ENCODE measurements at regions of chr19 and their contacts with region 1.

Region 1: GRCh38 chr19:49451430-49452181 is at the start of gene PIH1D1:
- DNase-seq: peak; percentile 69 to 97 (median 94)
- ATAC-seq: peak; percentile 71
- H3K4me3 ChIP-seq: peak within 1 kb of the TSS; percentile 85
- H3K4me3 Mint-ChIP-seq: peak within 1 kb of the TSS; percentile 95 to 100 (median 99)
- H3K27ac ChIP-seq: peak within 1 kb of the TSS; percentile 95
- H3K27ac Mint-ChIP-seq: peak within 1 kb of the TSS; percentile 92 to 100 (median 99)
- H3K4me1 ChIP-seq: peaks cover 15 to 26% of the 10 kb centered on the region in 2 donors
- H3K4me1 Mint-ChIP-seq: peaks cover 31 to 68% (median 55%) of the 10 kb centered on the region in 7 donors
- H3K27me3 ChIP-seq: no peaks in the 10 kb centered on the region
- H3K27me3 Mint-ChIP-seq: no peaks in the 10 kb centered on the region
- total RNA-seq, gene PIH1D1: 136 to 183 (median 159) TPM

Region 2: DNA sequence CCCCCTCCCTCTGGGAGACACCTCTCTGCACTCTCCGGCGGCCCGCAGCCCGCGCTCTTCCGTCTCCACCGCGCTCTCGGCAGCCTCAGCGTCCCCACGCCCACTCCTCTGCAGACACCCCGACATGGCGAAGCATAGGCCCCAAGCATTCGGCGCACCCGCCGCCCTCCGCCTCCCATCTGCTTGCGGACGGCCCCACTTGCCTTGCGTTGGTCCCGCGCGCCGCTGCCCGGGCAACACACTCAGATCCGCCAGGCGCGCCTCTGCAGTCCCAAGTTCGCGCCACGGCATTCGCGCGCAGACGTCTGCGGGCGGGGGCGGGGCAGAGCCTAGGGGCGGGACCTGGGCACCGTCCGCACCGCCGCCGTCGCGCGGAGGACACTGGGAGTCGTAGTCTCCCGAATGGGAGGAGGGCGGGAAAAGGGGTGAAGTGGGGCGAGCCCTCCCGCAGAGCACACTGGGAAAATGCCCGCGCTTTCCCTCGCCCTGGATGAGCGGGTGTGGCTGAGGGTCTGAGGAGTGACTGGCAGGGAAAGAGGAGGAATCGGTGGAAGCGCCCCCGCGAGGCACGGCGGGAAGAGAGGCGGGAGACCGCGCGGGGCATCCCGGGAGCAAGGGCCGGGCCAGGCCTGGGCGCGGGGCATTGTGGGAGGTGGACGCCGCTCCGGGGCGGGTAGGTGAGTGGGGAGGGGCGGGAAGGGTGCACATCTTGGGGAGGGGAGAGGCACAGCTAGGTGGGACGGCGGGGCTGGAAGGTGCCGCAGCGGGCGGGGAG is 1281.4 kb before region 1 on chr19 and contains the starts of genes LIG1 and ZSWIM9:
- CTCF ChIA-PET with region 1: interaction called, 11 read pairs
- POLR2A ChIA-PET with region 1: no interaction called
- intact Hi-C with region 1: no loop called
- DNase-seq: peak; percentile 87 to 96 (median 94)
- ATAC-seq: peak; percentile 89
- H3K4me3 ChIP-seq: peak within 1 kb of the TSS; percentile 98
- H3K4me3 Mint-ChIP-seq: peak within 1 kb of the TSS; percentile 90 to 100 (median 97)
- H3K27ac ChIP-seq: peak within 1 kb of the TSS; percentile 94
- H3K27ac Mint-ChIP-seq: peak within 1 kb of the TSS; percentile 92 to 100 (median 97)
- H3K4me1 ChIP-seq: peaks cover 14 to 16% of the 10 kb centered on the region in 2 donors
- H3K4me1 Mint-ChIP-seq: peaks cover 20 to 44% (median 32%) of the 10 kb centered on the region in 7 donors
- H3K27me3 ChIP-seq: no peaks in the 10 kb centered on the region
- H3K27me3 Mint-ChIP-seq: no peaks in the 10 kb centered on the region
- total RNA-seq, gene LIG1: 61.0 to 134 (median 122) TPM
- total RNA-seq, gene ZSWIM9: 5.0 to 11.6 (median 7.4) TPM

Region 3: GRCh38 chr19:48290771-48291488 is 1160.7 kb before region 1 on chr19:
- CTCF ChIA-PET with region 1: no interaction called
- POLR2A ChIA-PET with region 1: no interaction called
- intact Hi-C with region 1: no loop called
- DNase-seq: peak; percentile 22 to 79 (median 56)
- ATAC-seq: peak; percentile 79
- H3K4me3 ChIP-seq: peak overlapping the region; percentile 72
- H3K4me3 Mint-ChIP-seq: peak overlapping the region; percentile 71 to 86 (median 81)
- H3K27ac ChIP-seq: no peak overlapping the region
- H3K27ac Mint-ChIP-seq: peak overlapping the region in 2 of 9 donors; percentile 9 to 46
- H3K4me1 ChIP-seq: peaks cover 6 to 7% of the 10 kb centered on the region in 2 donors
- H3K4me1 Mint-ChIP-seq: peaks cover 0 to 8% (median 3%) of the 10 kb centered on the region in 7 donors
- H3K27me3 ChIP-seq: peaks cover 0 to 3% of the 10 kb centered on the region in 2 donors
- H3K27me3 Mint-ChIP-seq: peaks cover 0 to 9% (median 4%) of the 10 kb centered on the region in 5 donors

Region 4: GRCh38 chr19:49073514-49074378 is 377.9 kb before region 1 on chr19:
- CTCF ChIA-PET with region 1: no interaction called
- POLR2A ChIA-PET with region 1: no interaction called
- intact Hi-C with region 1: no loop called
- DNase-seq: no peak
- ATAC-seq: no peak
- H3K4me3 ChIP-seq: no peak overlapping the region
- H3K4me3 Mint-ChIP-seq: peak overlapping the region; percentile 11 to 82 (median 72)
- H3K27ac ChIP-seq: no peak overlapping the region
- H3K27ac Mint-ChIP-seq: peak overlapping the region in 3 of 9 donors; percentile 4 to 62 (median 7)
- H3K4me1 ChIP-seq: no peaks in the 10 kb centered on the region
- H3K4me1 Mint-ChIP-seq: peaks cover 7 to 20% (median 13%) of the 10 kb centered on the region in 7 donors
- H3K27me3 ChIP-seq: peaks cover 4 to 12% of the 10 kb centered on the region in 2 donors
- H3K27me3 Mint-ChIP-seq: peaks cover 48 to 73% (median 53%) of the 10 kb centered on the region in 5 donors

Region 5: DNA sequence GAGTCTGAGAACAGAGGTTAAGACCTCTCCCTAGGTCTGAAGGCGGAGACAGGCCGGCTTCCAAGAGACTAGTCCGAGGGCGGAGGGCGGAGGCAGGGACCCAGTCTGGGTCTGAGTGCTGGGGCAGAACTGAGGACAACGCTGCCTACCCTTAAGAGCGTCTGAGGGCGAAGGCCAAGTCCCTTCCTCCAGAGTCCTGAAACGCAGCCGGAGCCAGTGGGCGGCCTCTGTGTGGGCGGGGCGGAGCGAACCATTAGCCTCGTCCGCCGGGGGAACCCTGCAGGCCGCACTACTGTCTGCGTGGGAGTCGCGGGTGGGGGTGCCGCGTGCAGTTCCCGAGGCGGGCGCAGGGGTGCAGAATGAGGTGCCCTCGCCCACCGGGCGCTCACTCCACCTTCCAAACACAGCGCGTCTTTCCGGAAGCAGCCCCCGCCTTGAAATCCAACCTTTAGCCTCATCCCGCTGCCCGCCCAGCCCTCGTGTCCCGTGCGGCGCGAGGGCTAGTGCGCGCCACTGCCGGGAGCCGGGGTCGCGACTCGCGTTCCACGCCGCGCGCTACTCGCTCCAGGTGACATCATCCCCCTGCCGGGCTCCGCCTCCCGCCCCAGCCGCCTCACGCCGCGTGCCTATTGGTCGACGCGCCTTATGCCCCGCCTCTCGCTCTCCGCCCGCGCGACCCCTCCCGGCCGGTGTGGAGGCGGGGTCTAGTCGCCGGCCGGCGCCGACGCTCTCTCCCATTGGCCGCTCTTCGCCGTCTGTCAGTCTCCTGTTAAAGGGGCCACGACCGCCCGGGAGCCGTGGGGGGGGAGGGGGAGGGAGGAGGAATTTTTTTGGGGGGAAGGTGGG is 332.8 kb before region 1 on chr19 and contains the start of gene C19orf73:
- CTCF ChIA-PET with region 1: no interaction called
- POLR2A ChIA-PET with region 1: no interaction called
- intact Hi-C with region 1: loop called in 1 of 2 experiments (anchors 5 kb)
- DNase-seq: peak; percentile 93 to 98 (median 97)
- ATAC-seq: peak; percentile 91
- H3K4me3 ChIP-seq: peak within 1 kb of the TSS; percentile 83
- H3K4me3 Mint-ChIP-seq: peak within 1 kb of the TSS; percentile 83 to 91 (median 88)
- H3K27ac ChIP-seq: peak within 1 kb of the TSS; percentile 92
- H3K27ac Mint-ChIP-seq: peak within 1 kb of the TSS; percentile 89 to 95 (median 93)
- H3K4me1 ChIP-seq: peaks cover 13 to 16% of the 10 kb centered on the region in 2 donors
- H3K4me1 Mint-ChIP-seq: peaks cover 25 to 43% (median 39%) of the 10 kb centered on the region in 7 donors
- H3K27me3 ChIP-seq: no peaks in the 10 kb centered on the region
- H3K27me3 Mint-ChIP-seq: peaks cover 0 to 27% (median 0%) of the 10 kb centered on the region in 5 donors
- total RNA-seq, gene C19orf73: 1.3 to 2.8 (median 2.2) TPM

Region 6: DNA sequence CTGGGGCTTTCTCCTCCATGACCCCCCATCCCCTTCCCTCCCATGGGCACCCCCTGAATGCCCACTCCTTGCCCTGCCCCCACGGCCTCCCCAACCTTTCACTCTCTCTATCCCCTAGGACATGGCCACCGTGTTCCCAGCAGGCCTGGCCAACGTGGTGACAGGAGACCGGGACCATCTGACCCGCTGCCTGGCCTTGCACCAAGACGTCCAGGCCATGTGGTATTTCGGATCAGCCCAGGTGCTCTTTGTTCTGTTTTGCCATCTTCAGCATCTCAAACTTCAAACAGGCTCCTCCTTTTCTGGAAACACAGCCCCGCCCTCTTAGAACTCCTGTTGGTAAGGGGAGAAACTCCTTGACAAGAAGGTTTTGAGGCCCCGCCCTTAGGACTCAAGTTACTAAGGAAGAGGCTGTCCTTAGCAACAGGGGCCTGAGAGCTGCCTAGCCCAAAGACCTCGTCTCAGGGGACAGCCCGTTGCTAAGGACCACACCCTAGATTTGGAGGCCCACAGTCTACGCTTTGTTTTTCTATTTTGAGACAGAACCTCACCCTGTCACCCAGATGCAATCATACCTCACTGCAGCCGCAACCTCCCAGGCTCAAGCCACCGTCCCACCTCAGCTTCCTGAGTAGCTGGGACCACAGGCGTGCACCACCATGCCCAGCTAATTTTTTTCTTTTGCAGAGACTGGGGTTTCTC is 17.3 kb after region 1 on chr19:
- CTCF ChIA-PET with region 1: interaction called, 83 read pairs
- POLR2A ChIA-PET with region 1: interaction called, 226 read pairs
- intact Hi-C with region 1: loop called (anchors 1 kb)
- DNase-seq: peak; percentile 59 to 98 (median 95)
- ATAC-seq: peak; percentile 87
- H3K4me3 ChIP-seq: peak overlapping the region; percentile 10
- H3K4me3 Mint-ChIP-seq: peak overlapping the region; percentile 73 to 91 (median 81)
- H3K27ac ChIP-seq: peak overlapping the region; percentile 97
- H3K27ac Mint-ChIP-seq: peak overlapping the region; percentile 94 to 100 (median 100)
- H3K4me1 ChIP-seq: peaks cover 55 to 59% of the 10 kb centered on the region in 2 donors
- H3K4me1 Mint-ChIP-seq: peaks cover 23 to 56% (median 40%) of the 10 kb centered on the region in 7 donors
- H3K27me3 ChIP-seq: no peaks in the 10 kb centered on the region
- H3K27me3 Mint-ChIP-seq: no peaks in the 10 kb centered on the region

Region 7: GRCh38 chr19:49487277-49488045 is 35.9 kb after region 1 on chr19 and contains the start of gene RPL13A:
- CTCF ChIA-PET with region 1: interaction called, 3 read pairs
- POLR2A ChIA-PET with region 1: interaction called, 36 read pairs
- intact Hi-C with region 1: loop called (anchors 1 kb)
- DNase-seq: peak; percentile 97 to 99 (median 99)
- ATAC-seq: peak; percentile 94
- H3K4me3 ChIP-seq: peak within 1 kb of the TSS; percentile 100
- H3K4me3 Mint-ChIP-seq: peak within 1 kb of the TSS; percentile 95 to 99 (median 98)
- H3K27ac ChIP-seq: peak within 1 kb of the TSS; percentile 92
- H3K27ac Mint-ChIP-seq: peak within 1 kb of the TSS; percentile 89 to 99 (median 96)
- H3K4me1 ChIP-seq: peaks cover 19 to 26% of the 10 kb centered on the region in 2 donors
- H3K4me1 Mint-ChIP-seq: peaks cover 27 to 52% (median 42%) of the 10 kb centered on the region in 7 donors
- H3K27me3 ChIP-seq: no peaks in the 10 kb centered on the region
- H3K27me3 Mint-ChIP-seq: peaks cover 0 to 9% (median 0%) of the 10 kb centered on the region in 5 donors
- total RNA-seq, gene RPL13A: 2,467 to 6,044 (median 5,762) TPM

Region 8: DNA sequence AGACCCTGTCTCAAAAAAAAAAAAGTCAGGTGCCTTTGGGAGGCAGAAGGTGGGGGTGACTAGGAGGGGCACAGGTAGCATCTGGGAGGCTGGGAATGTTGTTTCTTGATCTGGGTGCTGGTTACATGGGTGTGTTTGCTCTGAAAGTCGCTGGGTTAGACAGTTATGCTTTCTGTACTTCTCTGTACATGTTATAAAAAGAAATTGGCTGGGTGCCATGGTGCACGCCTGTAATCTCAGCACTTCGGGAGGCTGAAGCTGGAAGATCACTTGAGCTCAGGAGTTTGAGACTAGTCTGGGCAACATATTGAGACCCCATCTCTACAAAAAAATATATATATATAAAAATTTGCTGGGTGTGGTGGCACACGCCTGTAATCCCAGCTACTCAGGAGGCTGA is 113.7 kb after region 1 on chr19:
- CTCF ChIA-PET with region 1: no interaction called
- POLR2A ChIA-PET with region 1: interaction called, 13 read pairs
- intact Hi-C with region 1: no loop called
- DNase-seq: peak in 5 of 9 donors; percentile 46 to 65 (median 54)
- ATAC-seq: no peak
- H3K4me3 ChIP-seq: peak overlapping the region; percentile 31
- H3K4me3 Mint-ChIP-seq: peak overlapping the region; percentile 11 to 90 (median 73)
- H3K27ac ChIP-seq: peak overlapping the region; percentile 88
- H3K27ac Mint-ChIP-seq: peak overlapping the region; percentile 91 to 99 (median 96)
- H3K4me1 ChIP-seq: peaks cover 77 to 85% of the 10 kb centered on the region in 2 donors
- H3K4me1 Mint-ChIP-seq: peaks cover 64 to 90% (median 84%) of the 10 kb centered on the region in 7 donors
- H3K27me3 ChIP-seq: no peaks in the 10 kb centered on the region
- H3K27me3 Mint-ChIP-seq: peaks cover 0 to 2% (median 0%) of the 10 kb centered on the region in 5 donors

Region 9: GRCh38 chr19:49590071-49590970 is 138.7 kb after region 1 on chr19:
- CTCF ChIA-PET with region 1: interaction called, 3 read pairs
- POLR2A ChIA-PET with region 1: interaction called, 13 read pairs
- intact Hi-C with region 1: loop called in 1 of 2 experiments (anchors 1 kb)
- DNase-seq: peak; percentile 85 to 98 (median 97)
- ATAC-seq: peak; percentile 90
- H3K4me3 ChIP-seq: peak overlapping the region; percentile 97
- H3K4me3 Mint-ChIP-seq: peak overlapping the region; percentile 85 to 95 (median 94)
- H3K27ac ChIP-seq: peak overlapping the region; percentile 86
- H3K27ac Mint-ChIP-seq: peak overlapping the region; percentile 76 to 95 (median 93)
- H3K4me1 ChIP-seq: peaks cover 15 to 18% of the 10 kb centered on the region in 2 donors
- H3K4me1 Mint-ChIP-seq: peaks cover 26 to 42% (median 31%) of the 10 kb centered on the region in 7 donors
- H3K27me3 ChIP-seq: no peaks in the 10 kb centered on the region
- H3K27me3 Mint-ChIP-seq: peaks cover 0 to 12% (median 0%) of the 10 kb centered on the region in 5 donors

Measured in naive thymus-derived CD4-positive, alpha-beta T cell (primary cell).